Activated CD4-positive, alpha-beta T cell treated with anti-CD3 and anti-CD28 coated beads for 36 hours (primary cell): ENCODE measurements at regions of chr16 and their contacts with region 1.

Region 1: GRCh38 chr16:67311607-67312488 is 14.7 kb downstream of the KCTD19 start:
- DNase-seq: peak; percentile 94
- ATAC-seq: peak; percentile 98
- H3K4me3 Mint-ChIP-seq: peak overlapping the region; percentile 1
- H3K27ac Mint-ChIP-seq: peak overlapping the region; percentile 98
- H3K4me1 Mint-ChIP-seq: peaks cover 40% of the 10 kb centered on the region
- H3K27me3 Mint-ChIP-seq: peaks cover 1% of the 10 kb centered on the region

Region 2: GRCh38 chr16:67109407-67110135 is 202.3 kb before region 1 on chr16 and contains the start of gene PHAF1:
- CTCF ChIA-PET with region 1: no interaction called
- POLR2A ChIA-PET with region 1: no interaction called
- intact Hi-C with region 1: loop called in 1 of 2 experiments (anchors 2 kb)
- DNase-seq: peak; percentile 98
- ATAC-seq: peak; percentile 94
- H3K4me3 Mint-ChIP-seq: peak within 1 kb of the TSS; percentile 94
- H3K27ac Mint-ChIP-seq: peak within 1 kb of the TSS; percentile 85
- H3K4me1 Mint-ChIP-seq: peaks cover 24% of the 10 kb centered on the region
- H3K27me3 Mint-ChIP-seq: no peaks in the 10 kb centered on the region
- total RNA-seq, gene PHAF1: 12.7 to 14.0 TPM

Region 3: GRCh38 chr16:67252609-67253497 is 59.0 kb before region 1 on chr16:
- CTCF ChIA-PET with region 1: no interaction called
- POLR2A ChIA-PET with region 1: no interaction called
- intact Hi-C with region 1: no loop called
- DNase-seq: no peak
- ATAC-seq: no peak
- H3K4me3 Mint-ChIP-seq: no peak overlapping the region
- H3K27ac Mint-ChIP-seq: no peak overlapping the region
- H3K4me1 Mint-ChIP-seq: peaks cover 19% of the 10 kb centered on the region
- H3K27me3 Mint-ChIP-seq: peaks cover 11% of the 10 kb centered on the region

Region 4: DNA sequence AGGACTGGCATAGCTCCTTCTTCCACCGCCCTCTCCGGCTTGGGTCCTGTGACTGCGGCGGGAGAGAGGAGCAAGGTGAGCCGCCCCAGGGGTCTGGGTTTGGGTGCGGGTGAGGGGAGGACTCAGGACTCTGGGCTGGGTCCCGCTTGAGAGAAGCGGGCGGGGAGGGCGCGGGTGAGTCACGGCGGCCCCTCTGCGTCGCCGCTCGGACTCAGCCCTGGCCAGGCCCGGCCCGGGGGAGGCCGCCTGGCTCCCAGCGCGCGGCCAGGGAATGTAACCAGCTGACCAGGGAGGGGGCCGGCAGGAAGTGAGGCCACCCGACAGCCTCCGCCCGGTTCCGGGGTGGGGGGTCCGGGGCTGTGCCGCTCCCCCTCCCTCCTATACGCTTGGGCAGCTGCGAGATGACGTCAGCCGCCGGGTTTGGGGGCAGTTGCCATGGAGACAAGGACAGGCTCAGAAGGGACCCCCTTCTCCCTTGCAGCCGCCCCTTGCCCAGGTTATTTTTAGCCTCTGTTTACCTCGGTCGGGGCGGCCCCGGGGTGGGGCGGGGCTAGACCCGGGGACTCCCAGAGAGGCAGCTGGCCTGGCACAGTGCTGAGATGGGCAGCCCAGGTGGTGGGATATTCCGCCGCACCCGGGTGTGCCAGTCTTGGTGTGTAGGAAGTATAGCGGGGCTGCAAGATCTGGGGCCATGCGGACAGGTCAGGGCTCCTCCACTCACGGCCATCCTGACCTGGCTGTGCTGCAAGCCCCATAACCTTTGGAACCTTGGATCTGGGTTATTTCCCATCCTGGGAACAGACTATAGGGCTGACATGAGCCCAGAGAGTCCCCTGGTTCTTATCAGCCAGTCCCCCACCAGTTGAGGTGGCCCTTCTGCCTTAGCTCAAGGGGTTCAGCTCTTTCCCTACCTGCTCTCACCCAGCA is 218.4 kb after region 1 on chr16:
- CTCF ChIA-PET with region 1: no interaction called
- POLR2A ChIA-PET with region 1: no interaction called
- intact Hi-C with region 1: no loop called
- DNase-seq: peak; percentile 40
- ATAC-seq: peak; percentile 27
- H3K4me3 Mint-ChIP-seq: peak overlapping the region; percentile 64
- H3K27ac Mint-ChIP-seq: peak overlapping the region; percentile 58
- H3K4me1 Mint-ChIP-seq: peaks cover 7% of the 10 kb centered on the region
- H3K27me3 Mint-ChIP-seq: peaks cover 16% of the 10 kb centered on the region